Adrenal gland (tissue), 19 donors: ENCODE measurements at regions of chr12 and their contacts with region 1.

Region 1: GRCh38 chr12:52087961-52088820 is 8.7 kb downstream of the SMIM41 start:
- DNase-seq: peak in 1 of 7 donors; percentile 37
- H3K4me3 ChIP-seq: no peak overlapping the region
- H3K27ac ChIP-seq: no peak overlapping the region
- H3K4me1 ChIP-seq: no peaks in the 10 kb centered on the region
- H3K27me3 ChIP-seq: peaks cover 4% of the 10 kb centered on the region
- CTCF ChIP-seq: no peak
- POLR2A ChIP-seq: no peak

Region 2: GRCh38 chr12:52006726-52007157 is 81.4 kb before region 1 on chr12 and contains the start of gene TAMALIN:
- intact Hi-C with region 1: loop called in 1 of 2 experiments (anchors 5 kb)
- DNase-seq: peak in 6 of 7 donors; percentile 29 to 68 (median 52)
- H3K4me3 ChIP-seq: peak within 1 kb of the TSS in 2 of 4 donors; percentile 19 to 78
- H3K27ac ChIP-seq: peak within 1 kb of the TSS in 4 of 5 donors; percentile 54 to 88 (median 62)
- H3K4me1 ChIP-seq: peaks cover 0 to 12% of the 10 kb centered on the region in 2 donors
- H3K27me3 ChIP-seq: peaks cover 13% of the 10 kb centered on the region
- CTCF ChIP-seq: no peak
- POLR2A ChIP-seq: peak; percentile 73 to 95
- total RNA-seq, gene TAMALIN: 1.8 to 26.0 (median 13.0) TPM

Region 3: GRCh38 chr12:52130711-52131110 is 42.5 kb after region 1 on chr12:
- intact Hi-C with region 1: no loop called
- DNase-seq: no peak
- H3K4me3 ChIP-seq: no peak overlapping the region
- H3K27ac ChIP-seq: no peak overlapping the region
- H3K4me1 ChIP-seq: no peaks in the 10 kb centered on the region
- H3K27me3 ChIP-seq: no peaks in the 10 kb centered on the region
- CTCF ChIP-seq: no peak
- POLR2A ChIP-seq: no peak